ENCODE measurements at regions of chr12 and their contacts with region 1.

Region 1: GRCh38 chr12:102740141-102740955 is 176.7 kb downstream of the PAH start:
- DNase-seq: no peak
- CTCF ChIP-seq: peak; percentile 24

Region 2: DNA sequence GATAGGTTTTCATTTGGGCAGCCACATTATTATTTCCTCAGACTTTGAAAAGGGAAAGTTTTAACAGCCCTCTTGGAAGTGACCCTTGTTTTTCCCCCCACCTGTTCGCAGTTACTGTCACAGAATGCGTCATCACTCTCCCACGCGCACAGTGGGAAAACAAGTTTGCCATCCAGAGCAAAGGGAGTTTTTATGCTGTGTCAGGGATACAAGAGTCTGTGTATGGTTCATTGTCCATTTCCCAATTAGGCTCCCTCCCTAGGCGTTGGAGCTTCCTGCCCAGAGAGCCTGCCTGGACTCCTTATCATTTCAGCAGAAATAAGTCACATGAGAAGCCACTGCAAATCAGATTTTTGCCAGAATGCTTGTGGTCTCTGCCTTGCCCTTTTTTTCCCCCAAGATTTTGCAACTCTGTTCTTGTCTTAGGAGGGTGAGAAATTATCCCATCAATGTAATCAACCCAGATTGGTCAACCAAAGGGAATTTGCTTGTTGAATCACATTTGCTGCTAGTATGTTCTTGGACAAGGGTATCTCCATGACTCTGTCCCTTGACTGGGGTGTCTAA is 364.1 kb before region 1 on chr12:
- CTCF ChIA-PET with region 1: no interaction called
- POLR2A ChIA-PET with region 1: no interaction called
- DNase-seq: no peak
- CTCF ChIP-seq: no peak

Region 3: GRCh38 chr12:102462795-102463465 is 277.4 kb before region 1 on chr12:
- CTCF ChIA-PET with region 1: no interaction called
- POLR2A ChIA-PET with region 1: no interaction called
- DNase-seq: no peak
- CTCF ChIP-seq: no peak

Region 4: DNA sequence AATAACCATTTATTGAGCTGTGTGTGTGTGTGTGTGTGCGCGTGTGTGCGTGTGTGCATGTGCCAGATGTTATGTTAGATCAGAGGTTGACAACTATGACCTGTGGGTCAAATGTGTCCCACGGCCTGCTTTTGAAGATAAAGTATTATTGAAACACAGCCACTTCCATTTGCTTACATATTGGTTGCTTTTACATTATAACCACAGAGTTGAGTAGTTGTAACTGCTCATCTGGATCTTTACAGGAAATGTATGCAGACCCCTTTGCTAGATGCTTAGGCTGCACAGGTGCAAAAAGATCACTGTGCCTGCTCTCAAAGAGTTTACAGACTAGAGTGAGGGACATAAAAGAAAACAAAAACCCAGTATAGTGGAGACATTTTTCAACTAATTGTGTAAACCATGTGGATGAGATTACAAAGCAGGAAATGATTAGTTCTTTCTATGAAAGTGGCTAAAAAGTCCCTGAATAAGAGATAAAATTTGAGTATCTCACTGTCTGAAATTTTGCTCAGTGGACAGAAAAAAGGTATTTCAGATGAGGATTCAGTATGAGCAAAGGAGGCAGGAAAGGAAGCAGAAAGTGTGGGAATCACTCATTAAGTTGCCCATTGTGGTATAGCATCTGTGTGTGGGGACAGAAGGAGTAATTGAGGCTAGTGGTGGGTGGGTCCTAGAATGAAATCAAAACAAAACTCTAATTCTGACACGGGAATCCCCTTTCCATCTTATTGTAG is 11.7 kb before region 1 on chr12:
- CTCF ChIA-PET with region 1: interaction called, 14 read pairs
- POLR2A ChIA-PET with region 1: no interaction called
- DNase-seq: peak; percentile 21
- CTCF ChIP-seq: no peak